ENCODE measurements at regions of chr14 and their contacts with region 1.

Region 1: DNA sequence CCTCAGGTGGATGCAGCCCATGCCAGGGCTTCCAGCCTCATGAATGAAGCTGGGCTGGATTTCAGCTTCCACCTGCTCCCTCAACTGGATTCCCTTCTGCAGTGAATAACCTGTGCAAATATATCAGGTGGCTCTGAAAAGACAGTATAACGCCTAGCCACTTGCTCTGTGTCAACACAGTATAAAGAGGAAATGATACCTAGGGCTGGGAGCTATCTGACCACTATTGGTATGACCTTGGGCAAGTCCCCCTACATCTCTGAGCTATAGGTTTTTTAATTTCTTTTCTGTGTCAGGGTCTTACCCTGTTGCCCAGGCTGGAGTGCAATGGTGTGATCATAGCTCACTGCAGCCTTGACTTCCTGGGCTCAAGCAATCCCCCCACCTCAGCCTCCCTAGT is 19.8 kb downstream of the ISM2 start:
- DNase-seq: no peak
- ATAC-seq: no peak
- H3K4me3 ChIP-seq: no peak overlapping the region
- H3K27ac ChIP-seq: no peak overlapping the region
- H3K4me1 ChIP-seq: no peaks in the 10 kb centered on the region
- H3K27me3 ChIP-seq: no peaks in the 10 kb centered on the region
- CTCF ChIP-seq: no peak

Region 2: GRCh38 chr14:77498120-77498979 is 19.6 kb after region 1 on chr14 and contains the start of gene ISM2:
- CTCF ChIA-PET with region 1: no interaction called
- POLR2A ChIA-PET with region 1: interaction called, 13 read pairs
- in situ Hi-C with region 1: no loop called
- intact Hi-C with region 1: no loop called
- DNase-seq: no peak
- ATAC-seq: peak; percentile 80
- H3K4me3 ChIP-seq: peak within 1 kb of the TSS; percentile 41 to 48
- H3K27ac ChIP-seq: no peak within 1 kb of the TSS
- H3K4me1 ChIP-seq: no peaks in the 10 kb centered on the region
- H3K27me3 ChIP-seq: no peaks in the 10 kb centered on the region; the same call in 1 of the 2 replicates
- CTCF ChIP-seq: no peak
- total RNA-seq, gene ISM2: 2.6 TPM

Region 3: DNA sequence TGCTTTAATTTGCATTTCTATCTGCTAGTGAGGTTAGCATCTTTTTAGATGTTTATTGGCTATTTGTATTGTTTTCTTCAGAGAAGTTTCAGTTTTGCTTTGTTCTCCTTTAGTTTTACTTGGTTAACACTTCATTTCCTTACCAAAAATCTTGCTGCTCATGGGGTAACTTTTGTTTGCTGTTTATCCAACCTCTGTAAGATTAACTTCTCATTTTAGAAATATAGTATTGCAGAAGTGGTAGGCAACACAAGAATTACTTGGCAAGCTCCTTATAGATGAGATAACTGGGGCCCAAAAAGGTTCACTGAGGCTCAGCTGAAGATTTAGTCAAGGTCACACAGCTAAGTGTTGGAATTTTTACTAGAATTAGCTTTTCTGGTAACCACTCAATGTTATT is 188.5 kb after region 1 on chr14:
- CTCF ChIA-PET with region 1: no interaction called
- POLR2A ChIA-PET with region 1: interaction called, 14 read pairs
- in situ Hi-C with region 1: no loop called
- intact Hi-C with region 1: no loop called
- DNase-seq: no peak
- ATAC-seq: no peak
- H3K4me3 ChIP-seq: no peak overlapping the region
- H3K27ac ChIP-seq: no peak overlapping the region
- H3K4me1 ChIP-seq: no peaks in the 10 kb centered on the region
- H3K27me3 ChIP-seq: no peaks in the 10 kb centered on the region
- CTCF ChIP-seq: no peak